CD4-positive, alpha-beta T cell (primary cell): ENCODE measurements at regions of chr2 and their contacts with region 1.

Region 1: DNA sequence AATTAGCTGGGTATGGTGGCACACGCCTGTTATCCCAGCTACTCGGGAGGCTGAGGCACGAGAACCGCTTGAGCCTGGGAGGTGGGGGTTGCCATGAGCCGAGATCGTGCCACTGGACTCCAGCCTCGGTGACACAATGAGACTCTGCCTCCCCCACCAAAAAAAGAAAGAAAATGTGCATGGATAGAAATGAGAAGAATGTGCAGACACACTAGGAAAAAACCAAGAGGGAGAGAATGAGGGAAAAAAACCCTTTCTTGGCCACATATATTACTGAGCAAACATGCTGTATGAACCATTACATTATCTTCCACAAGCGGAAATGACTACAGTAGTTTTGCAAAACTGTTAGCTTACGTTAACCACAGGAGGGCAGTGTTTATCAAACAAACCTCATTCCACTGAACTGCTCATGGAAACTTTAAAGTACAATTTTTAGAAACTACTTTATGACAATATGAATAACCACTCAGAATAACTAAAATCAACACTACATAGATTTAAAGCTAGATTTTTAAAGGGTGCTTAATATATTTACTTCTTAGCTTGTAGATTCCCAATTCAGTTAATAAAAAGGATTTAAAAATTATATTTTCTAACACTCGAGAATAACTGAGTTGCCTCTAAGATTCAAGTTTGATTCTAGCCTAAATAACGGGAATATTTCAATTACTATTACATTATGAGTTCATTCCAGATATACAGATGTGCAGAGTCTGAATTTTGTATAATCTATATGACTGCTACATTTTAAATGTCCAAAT is 26.4 kb downstream of the ASXL2 start:
- DNase-seq: peak in 5 of 14 experiments; percentile 10 to 84 (median 83)
- ATAC-seq: peak; percentile 96
- H3K4me3 ChIP-seq: peak overlapping the region; percentile 19
- H3K4me3 Mint-ChIP-seq: peak overlapping the region; percentile 68
- H3K27ac ChIP-seq: no peak overlapping the region
- H3K27ac Mint-ChIP-seq: peak overlapping the region; percentile 35
- H3K4me1 ChIP-seq: peaks cover 20% of the 10 kb centered on the region
- H3K4me1 Mint-ChIP-seq: peaks cover 49% of the 10 kb centered on the region
- H3K27me3 ChIP-seq: no peaks in the 10 kb centered on the region
- H3K27me3 Mint-ChIP-seq: no peaks in the 10 kb centered on the region
- CTCF ChIP-seq: peak; percentile 70

Region 2: GRCh38 chr2:25794544-25795276 is 57.2 kb before region 1 on chr2:
- CTCF ChIA-PET with region 1: interaction called, 5 read pairs
- POLR2A ChIA-PET with region 1: interaction called, 9 read pairs
- intact Hi-C with region 1: loop called in 1 of 2 experiments (anchors 10 kb)
- DNase-seq: peak in 4 of 14 experiments; percentile 10 to 75 (median 57)
- ATAC-seq: peak; percentile 84
- H3K4me3 ChIP-seq: peak overlapping the region; percentile 43
- H3K4me3 Mint-ChIP-seq: peak overlapping the region; percentile 91
- H3K27ac ChIP-seq: peak overlapping the region; percentile 64 to 87
- H3K27ac Mint-ChIP-seq: peak overlapping the region; percentile 97
- H3K4me1 ChIP-seq: peaks cover 23% of the 10 kb centered on the region
- H3K4me1 Mint-ChIP-seq: peaks cover 91% of the 10 kb centered on the region
- H3K27me3 ChIP-seq: no peaks in the 10 kb centered on the region
- H3K27me3 Mint-ChIP-seq: no peaks in the 10 kb centered on the region
- CTCF ChIP-seq: no peak

Region 3: GRCh38 chr2:25912851-25913695 is 61.2 kb after region 1 on chr2:
- CTCF ChIA-PET with region 1: interaction called, 4 read pairs
- POLR2A ChIA-PET with region 1: no interaction called
- intact Hi-C with region 1: loop called in 1 of 2 experiments (anchors 1 kb)
- DNase-seq: no peak
- ATAC-seq: peak; percentile 56
- H3K4me3 ChIP-seq: no peak overlapping the region
- H3K4me3 Mint-ChIP-seq: no peak overlapping the region
- H3K27ac ChIP-seq: no peak overlapping the region
- H3K27ac Mint-ChIP-seq: no peak overlapping the region
- H3K4me1 ChIP-seq: peaks cover 10% of the 10 kb centered on the region
- H3K4me1 Mint-ChIP-seq: peaks cover 24% of the 10 kb centered on the region
- H3K27me3 ChIP-seq: no peaks in the 10 kb centered on the region
- H3K27me3 Mint-ChIP-seq: no peaks in the 10 kb centered on the region
- CTCF ChIP-seq: no peak

Region 4: DNA sequence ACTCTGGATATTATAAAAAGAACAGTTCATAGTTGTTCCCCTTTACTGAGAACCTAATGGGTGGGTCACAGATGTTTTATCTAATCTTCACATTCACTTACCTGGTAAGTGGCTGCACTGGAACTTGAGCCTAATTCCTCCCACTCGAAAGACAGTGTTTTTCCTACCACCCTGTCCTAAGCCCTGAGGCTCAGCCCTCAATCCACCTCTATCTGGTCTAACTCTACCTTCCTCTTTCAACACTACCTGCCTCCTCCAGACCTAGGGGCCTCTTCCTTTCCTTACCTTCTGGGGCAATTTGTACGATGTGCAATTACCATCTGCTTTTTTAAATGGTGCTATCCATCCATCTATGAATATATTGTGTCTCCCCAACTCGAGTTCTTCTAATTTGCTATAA is 140.0 kb after region 1 on chr2:
- CTCF ChIA-PET with region 1: interaction called, 8 read pairs
- POLR2A ChIA-PET with region 1: interaction called, 3 read pairs
- intact Hi-C with region 1: loop called in 1 of 2 experiments (anchors 2 kb)
- DNase-seq: no peak
- ATAC-seq: peak; percentile 13
- H3K4me3 ChIP-seq: no peak overlapping the region
- H3K4me3 Mint-ChIP-seq: no peak overlapping the region
- H3K27ac ChIP-seq: no peak overlapping the region
- H3K27ac Mint-ChIP-seq: peak overlapping the region; percentile 1
- H3K4me1 ChIP-seq: peaks cover 9% of the 10 kb centered on the region
- H3K4me1 Mint-ChIP-seq: peaks cover 8% of the 10 kb centered on the region
- H3K27me3 ChIP-seq: no peaks in the 10 kb centered on the region
- H3K27me3 Mint-ChIP-seq: no peaks in the 10 kb centered on the region
- CTCF ChIP-seq: no peak